WTC11 (cell line): ENCODE measurements at regions of chr13 and their contacts with region 1.

Region 1: GRCh38 chr13:103140001-103140671 is 73.9 kb upstream of the SLC10A2 start:
- DNase-seq: peak; percentile 22
- ATAC-seq: peak; percentile 98
- H3K4me3 Mint-ChIP-seq: no peak overlapping the region
- H3K27ac Mint-ChIP-seq: no peak overlapping the region
- H3K4me1 Mint-ChIP-seq: no peaks in the 10 kb centered on the region
- H3K27me3 Mint-ChIP-seq: no peaks in the 10 kb centered on the region; the same call in 1 of the 2 replicates
- CTCF ChIP-seq: peak; percentile 51; the same call in 1 of the 2 replicates

Region 2: DNA sequence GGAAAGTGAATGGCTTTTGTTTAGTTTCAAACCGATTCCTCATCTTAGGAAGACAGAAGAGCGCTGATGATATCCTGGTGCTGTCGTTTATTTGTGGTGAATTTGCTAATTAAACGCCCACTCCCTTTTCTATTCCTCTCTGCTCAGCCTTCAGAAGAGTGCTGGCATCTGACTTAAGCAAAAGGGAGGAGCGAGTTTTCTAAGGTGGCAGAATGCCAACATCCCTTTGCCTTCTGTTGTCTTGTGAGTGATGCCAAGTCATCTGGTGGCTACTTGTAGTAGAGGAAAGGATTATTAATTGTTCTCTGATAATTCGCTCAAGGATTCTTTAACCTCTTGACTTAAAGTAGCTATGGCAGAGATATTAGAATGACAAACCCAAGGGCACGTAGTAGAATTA is 226.2 kb before region 1 on chr13:
- CTCF ChIA-PET with region 1: interaction called, 32 read pairs
- POLR2A ChIA-PET with region 1: interaction called, 4 read pairs
- DNase-seq: no peak
- ATAC-seq: no peak
- H3K4me3 Mint-ChIP-seq: no peak overlapping the region
- H3K27ac Mint-ChIP-seq: no peak overlapping the region
- H3K4me1 Mint-ChIP-seq: no peaks in the 10 kb centered on the region
- H3K27me3 Mint-ChIP-seq: no peaks in the 10 kb centered on the region
- CTCF ChIP-seq: no peak

Region 3: GRCh38 chr13:103033999-103034398 is 106.1 kb before region 1 on chr13:
- CTCF ChIA-PET with region 1: interaction called, 15 read pairs
- POLR2A ChIA-PET with region 1: no interaction called
- DNase-seq: no peak
- ATAC-seq: no peak
- H3K4me3 Mint-ChIP-seq: no peak overlapping the region
- H3K27ac Mint-ChIP-seq: no peak overlapping the region
- H3K4me1 Mint-ChIP-seq: peaks cover 6% of the 10 kb centered on the region; the same call in 1 of the 2 replicates
- H3K27me3 Mint-ChIP-seq: no peaks in the 10 kb centered on the region
- CTCF ChIP-seq: no peak

Region 4: DNA sequence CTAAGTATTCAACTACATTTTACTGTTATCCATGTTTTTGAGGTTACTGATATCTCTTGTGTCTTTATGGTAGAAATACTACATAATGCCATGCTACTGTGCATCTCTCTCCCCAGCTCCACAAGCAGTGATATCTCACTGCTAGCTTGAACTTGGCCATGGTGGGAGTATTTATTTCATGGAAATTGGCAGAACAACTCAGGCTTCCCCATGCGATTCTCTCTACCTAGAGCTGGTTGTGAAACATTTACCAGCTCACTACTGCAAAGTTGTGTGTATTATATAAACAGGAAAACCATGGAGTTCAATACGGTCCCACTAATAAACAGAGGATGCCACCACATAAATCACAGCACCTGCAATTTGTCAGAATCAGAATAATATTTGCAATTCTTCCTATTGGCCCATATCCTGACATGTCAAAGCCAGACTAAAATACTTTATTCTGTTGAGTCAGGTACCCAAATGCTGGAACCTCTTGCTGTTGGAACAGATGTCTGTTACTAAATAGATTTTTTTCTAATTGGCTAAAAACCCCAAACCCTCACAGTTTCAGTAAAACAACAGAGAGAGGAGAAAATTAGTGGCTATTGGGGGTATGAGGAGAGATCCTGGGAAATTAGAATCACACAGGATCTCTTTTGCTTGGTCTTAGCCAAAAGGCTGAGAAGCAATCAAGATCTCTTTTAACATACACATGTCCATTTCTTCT is 17.5 kb after region 1 on chr13:
- CTCF ChIA-PET with region 1: no interaction called
- POLR2A ChIA-PET with region 1: no interaction called
- DNase-seq: no peak
- ATAC-seq: no peak
- H3K4me3 Mint-ChIP-seq: no peak overlapping the region
- H3K27ac Mint-ChIP-seq: no peak overlapping the region
- H3K4me1 Mint-ChIP-seq: peaks cover 8% of the 10 kb centered on the region
- H3K27me3 Mint-ChIP-seq: peaks cover 13% of the 10 kb centered on the region
- CTCF ChIP-seq: no peak